ENCODE measurements at regions of chr2 and their contacts with region 1.

Region 1: GRCh38 chr2:30915486-30915885 is 108.2 kb upstream of the CAPN13 start:
- DNase-seq: no peak
- H3K4me3 Mint-ChIP-seq: no peak overlapping the region
- H3K27ac Mint-ChIP-seq: no peak overlapping the region
- H3K4me1 Mint-ChIP-seq: no peaks in the 10 kb centered on the region
- H3K27me3 Mint-ChIP-seq: no peaks in the 10 kb centered on the region

Region 2: GRCh38 chr2:30927465-30928075 is 12.1 kb after region 1 on chr2:
- CTCF ChIA-PET with region 1: no interaction called
- POLR2A ChIA-PET with region 1: no interaction called
- DNase-seq: no peak
- H3K4me3 Mint-ChIP-seq: no peak overlapping the region
- H3K27ac Mint-ChIP-seq: no peak overlapping the region
- H3K4me1 Mint-ChIP-seq: no peaks in the 10 kb centered on the region
- H3K27me3 Mint-ChIP-seq: no peaks in the 10 kb centered on the region

Region 3: DNA sequence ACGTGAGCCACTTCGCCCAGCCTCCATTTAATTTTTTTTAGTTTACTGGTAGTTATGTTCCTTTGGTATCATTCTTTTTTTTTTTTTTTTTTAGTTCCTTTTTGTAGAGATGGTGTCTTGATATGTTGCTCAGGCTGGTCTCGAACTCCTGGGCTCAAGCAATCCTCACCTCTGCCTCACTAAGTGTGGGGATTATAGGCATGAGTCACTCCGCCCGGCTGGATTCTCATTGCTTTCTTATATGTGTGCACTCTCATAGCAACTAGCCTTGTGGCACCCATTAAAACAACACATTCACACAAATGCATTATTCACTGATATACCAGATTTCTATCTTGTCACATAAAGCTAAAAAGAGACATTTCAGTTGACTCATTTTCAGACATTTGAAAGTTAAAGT is 1716.6 kb after region 1 on chr2:
- CTCF ChIA-PET with region 1: no interaction called
- POLR2A ChIA-PET with region 1: interaction called, 11 read pairs
- DNase-seq: no peak
- H3K4me3 Mint-ChIP-seq: no peak overlapping the region
- H3K27ac Mint-ChIP-seq: no peak overlapping the region
- H3K4me1 Mint-ChIP-seq: peaks cover 28% of the 10 kb centered on the region
- H3K27me3 Mint-ChIP-seq: no peaks in the 10 kb centered on the region

Measured in activated CD4-positive, alpha-beta T cell treated with anti-CD3 and anti-CD28 coated beads, Interleukin-2, amount 10 ng/mL, durations not matched to agents 7 days and 5 days (primary cell).